Psoas muscle (tissue), 8 donors: ENCODE measurements at regions of chr20 and their contacts with region 1.

Region 1: GRCh38 chr20:44145131-44145775 is 41.7 kb downstream of the JPH2 start:
- DNase-seq: no peak
- ATAC-seq: peak; percentile 44 to 60 (median 58)
- H3K4me3 ChIP-seq: no peak overlapping the region
- H3K27ac ChIP-seq: peak overlapping the region; percentile 91
- H3K4me1 ChIP-seq: peaks cover 62% of the 10 kb centered on the region
- H3K27me3 ChIP-seq: no peaks in the 10 kb centered on the region
- CTCF ChIP-seq: no peak

Region 2: DNA sequence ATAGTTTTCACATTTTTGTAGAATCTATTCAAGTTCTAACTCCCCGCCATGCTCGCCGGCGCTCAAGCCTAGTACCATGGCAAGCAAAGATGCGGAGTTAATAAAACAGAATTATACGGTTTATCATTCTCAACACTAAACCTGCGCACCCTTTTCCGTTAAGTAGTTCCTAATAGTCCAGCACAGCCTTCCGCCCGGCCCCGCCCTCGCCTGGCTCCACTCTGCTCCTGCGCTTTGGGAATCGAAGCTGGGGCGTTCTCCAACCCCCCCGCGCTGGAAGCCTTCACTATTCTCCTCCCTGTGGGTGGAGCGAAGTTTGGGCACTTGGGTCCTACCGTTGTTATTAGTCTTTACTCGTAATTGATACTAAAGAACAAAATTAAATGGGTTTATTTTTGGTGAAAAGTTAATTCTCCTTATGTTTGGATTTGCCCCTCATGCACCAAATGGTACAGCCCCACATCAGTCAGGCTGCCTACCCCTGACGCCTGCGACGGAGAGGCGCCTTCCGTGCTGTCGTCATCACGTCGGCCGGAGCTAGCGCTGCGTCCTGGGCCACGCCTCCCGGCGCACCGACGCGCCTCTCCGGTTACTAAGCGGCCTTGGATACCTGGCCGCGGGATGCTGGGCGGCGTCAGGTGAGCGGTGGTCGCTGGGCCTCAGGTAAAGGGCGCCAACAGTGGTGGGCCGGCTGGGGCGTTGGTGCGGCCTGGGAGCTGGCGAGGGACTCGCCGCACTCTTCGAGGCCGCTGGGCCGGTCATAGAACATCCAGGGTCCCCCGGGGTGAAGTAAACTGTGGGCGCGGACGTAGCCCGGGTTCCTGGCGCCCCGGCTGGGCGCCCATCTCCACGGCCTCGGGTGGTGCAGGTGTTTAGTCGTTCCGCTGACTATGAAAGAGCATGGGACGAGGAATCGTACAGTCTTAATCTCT is 554.6 kb before region 1 on chr20 and contains the start of gene IFT52:
- intact Hi-C with region 1: no loop called
- DNase-seq: peak; percentile 92 to 96
- ATAC-seq: peak; percentile 99 to 100 (median 100)
- H3K4me3 ChIP-seq: peak within 1 kb of the TSS; percentile 89
- H3K27ac ChIP-seq: peak within 1 kb of the TSS; percentile 79
- H3K4me1 ChIP-seq: peaks cover 5% of the 10 kb centered on the region
- H3K27me3 ChIP-seq: no peaks in the 10 kb centered on the region
- CTCF ChIP-seq: no peak
- total RNA-seq, gene IFT52: 2.5 to 5.3 (median 3.7) TPM

Region 3: DNA sequence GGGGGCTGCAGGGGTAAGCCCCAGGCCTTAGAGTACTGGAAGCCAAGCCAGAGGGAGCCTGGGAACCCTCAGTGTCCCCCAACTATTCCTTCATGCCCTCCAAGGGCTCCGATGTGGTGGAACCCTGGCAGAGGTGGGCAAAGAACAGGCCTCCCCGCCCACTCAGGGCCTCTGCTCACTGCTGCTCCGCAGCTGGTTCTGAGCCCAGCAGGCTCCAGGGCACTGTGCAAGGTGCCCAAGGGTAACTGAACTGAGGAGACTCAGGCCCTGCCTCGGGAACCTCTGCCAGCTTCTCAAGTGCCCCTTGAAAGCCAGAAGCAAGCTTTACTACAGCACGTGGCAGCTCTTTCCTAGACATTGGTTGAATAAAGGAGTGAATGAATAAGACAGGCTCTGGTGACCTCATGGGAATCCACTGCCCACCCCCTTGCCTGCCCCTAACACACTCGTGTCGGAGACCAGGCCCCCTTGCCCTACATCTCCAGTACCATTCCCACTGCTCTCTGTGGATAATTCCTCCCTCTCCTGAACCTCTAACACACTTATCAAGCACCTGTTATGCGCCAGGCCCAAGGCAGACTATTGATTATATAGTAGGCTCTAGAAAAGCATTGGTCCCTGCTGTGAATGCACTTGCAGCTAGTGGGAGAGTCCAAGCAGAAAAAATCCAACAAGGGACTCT is 175.6 kb before region 1 on chr20:
- intact Hi-C with region 1: no loop called
- DNase-seq: no peak
- ATAC-seq: no peak
- H3K4me3 ChIP-seq: no peak overlapping the region
- H3K27ac ChIP-seq: no peak overlapping the region
- H3K4me1 ChIP-seq: no peaks in the 10 kb centered on the region
- H3K27me3 ChIP-seq: peaks cover 0 to 15% (median 2%) of the 10 kb centered on the region in 3 donors
- CTCF ChIP-seq: no peak

Region 4: DNA sequence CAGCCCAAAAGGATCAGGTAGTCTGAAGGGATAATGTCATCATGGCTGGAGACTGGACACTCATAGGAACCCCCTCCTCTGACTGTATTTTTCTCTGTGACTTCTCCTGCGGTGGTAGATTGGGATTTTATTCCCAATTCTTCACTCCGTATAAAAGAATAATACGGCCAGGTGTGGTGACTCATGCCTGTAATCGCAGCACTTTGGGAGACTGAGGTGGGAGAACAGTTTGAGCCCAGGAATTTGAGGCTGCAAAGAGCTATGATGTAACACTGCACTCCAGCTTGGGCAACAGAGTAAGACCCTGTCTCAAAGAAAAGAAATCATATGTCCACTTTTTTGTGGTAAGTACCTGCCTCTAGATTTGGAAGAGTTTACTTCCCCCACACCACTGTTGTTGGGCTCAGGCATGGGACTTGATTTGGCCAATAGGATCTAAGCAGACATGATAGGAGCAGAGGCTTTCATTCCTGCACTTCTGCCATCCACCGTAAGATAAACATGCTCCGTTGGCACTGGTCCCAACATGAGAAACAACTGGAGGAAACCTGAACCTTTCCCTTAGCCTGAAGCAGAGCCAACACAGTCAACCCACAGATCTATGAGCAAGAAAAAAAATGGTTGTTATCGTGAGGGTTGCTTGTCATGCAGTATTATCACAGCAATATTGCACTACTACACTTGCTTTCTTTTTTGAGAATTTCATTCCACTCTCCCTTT is 40.3 kb before region 1 on chr20:
- intact Hi-C with region 1: no loop called
- DNase-seq: no peak
- ATAC-seq: peak; percentile 71 to 87 (median 78)
- H3K4me3 ChIP-seq: no peak overlapping the region
- H3K27ac ChIP-seq: peak overlapping the region; percentile 50
- H3K4me1 ChIP-seq: no peaks in the 10 kb centered on the region
- H3K27me3 ChIP-seq: no peaks in the 10 kb centered on the region
- CTCF ChIP-seq: no peak

Region 5: DNA sequence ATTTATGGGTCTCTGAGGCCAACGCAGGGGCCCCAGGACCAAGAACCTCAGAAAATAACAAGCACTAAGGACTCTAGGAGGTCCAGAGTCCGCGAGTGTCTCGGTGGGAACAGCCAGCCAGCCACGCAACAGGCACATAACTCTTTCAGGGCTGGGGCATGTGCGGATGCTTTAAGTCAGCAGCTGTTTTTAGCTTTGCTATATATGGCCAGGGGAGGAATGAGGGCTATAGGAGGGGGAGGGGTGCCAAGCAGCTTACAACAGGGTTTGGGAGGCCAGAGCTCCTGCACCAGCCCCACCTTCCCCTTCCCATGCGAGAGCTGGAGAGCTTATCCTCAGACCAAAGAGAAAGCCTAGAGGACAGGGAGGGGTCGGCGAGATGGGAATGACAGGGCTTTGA is 35.6 kb after region 1 on chr20:
- intact Hi-C with region 1: loop called (anchors 2 to 5 kb)
- DNase-seq: peak; percentile 66 to 90
- ATAC-seq: peak; percentile 65 to 76 (median 72)
- H3K4me3 ChIP-seq: peak overlapping the region; percentile 84
- H3K27ac ChIP-seq: peak overlapping the region; percentile 97
- H3K4me1 ChIP-seq: peaks cover 78% of the 10 kb centered on the region
- H3K27me3 ChIP-seq: no peaks in the 10 kb centered on the region
- CTCF ChIP-seq: no peak